Cardiac septum (tissue), 1 donor: ENCODE measurements at regions of chr6 and their contacts with region 1.

Region 1: GRCh38 chr6:159042003-159042825 is 2.6 kb downstream of the TAGAP start:
- DNase-seq: peak; percentile 84

Region 2: DNA sequence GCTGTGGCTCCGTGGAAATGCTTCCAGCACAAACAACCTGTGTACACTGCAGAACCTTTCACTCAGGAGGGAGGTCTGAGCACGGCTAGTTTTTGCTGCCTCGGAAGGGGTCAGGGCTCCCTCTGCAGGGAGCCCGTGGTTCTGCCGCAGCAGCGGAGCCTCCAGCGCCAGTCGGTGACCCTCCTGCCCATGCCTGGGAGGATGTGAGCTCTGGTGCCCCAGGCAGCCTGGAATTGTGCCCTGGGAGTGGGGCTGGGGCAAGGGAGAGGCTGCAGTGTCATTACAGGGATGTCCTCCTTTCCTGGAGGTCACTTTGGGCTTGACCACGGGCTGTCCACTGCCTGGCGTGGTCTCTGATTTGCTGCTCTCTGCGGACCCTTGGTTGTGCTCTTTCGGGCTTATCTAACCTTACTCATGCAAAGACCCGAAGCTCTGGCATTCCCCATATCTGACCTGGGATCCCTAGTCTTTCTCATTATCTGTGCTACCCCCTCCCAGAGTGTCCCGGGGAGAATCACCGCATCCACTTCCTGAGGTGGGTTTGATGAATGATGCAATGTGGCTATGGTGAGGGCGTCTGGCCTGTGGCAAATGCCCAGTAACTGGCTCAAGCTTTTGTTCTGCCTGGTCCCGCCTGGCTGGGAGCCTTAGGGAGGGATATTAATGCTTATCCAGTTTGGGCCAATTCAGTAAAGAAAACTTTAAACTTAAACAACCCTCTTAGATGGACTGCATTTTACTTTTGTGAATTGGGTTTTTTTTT is 62.1 kb after region 1 on chr6:
- intact Hi-C with region 1: loop called (anchors 5 kb)
- DNase-seq: peak; percentile 87

Region 3: DNA sequence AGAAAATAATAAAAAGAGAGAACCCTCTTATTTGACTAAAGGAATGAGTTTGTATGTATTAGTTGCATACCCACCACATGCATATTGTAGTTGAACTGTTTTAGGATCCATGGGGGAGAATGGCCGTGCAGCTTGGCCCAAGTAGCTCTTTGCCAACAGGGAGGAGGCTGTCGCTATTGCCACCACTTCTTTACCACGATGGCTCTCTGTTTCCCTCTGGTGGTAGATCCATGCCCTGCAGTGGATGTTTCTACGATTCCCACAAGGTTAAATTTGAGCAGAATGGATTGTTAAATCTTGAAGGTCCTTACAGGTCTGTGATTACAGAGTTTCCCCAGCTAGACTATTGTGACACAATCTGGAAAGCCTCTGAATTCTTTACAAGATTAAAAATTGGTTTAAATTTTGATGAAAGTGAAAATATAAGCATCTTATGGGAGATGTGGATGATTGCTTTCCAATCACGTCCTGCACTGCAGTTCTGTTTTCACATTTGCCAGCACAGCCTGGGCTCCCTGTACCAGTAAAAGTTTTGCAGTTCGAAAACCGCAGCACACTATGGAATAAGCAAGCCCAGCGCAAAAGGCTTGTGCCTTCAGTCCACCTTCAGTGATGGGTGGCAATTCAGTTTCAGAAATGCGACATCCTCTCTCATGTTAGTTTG is 92.6 kb after region 1 on chr6:
- intact Hi-C with region 1: loop called (anchors 1 kb)
- DNase-seq: no peak